ENCODE measurements at regions of chr14 and their contacts with region 1.

Region 1: GRCh38 chr14:76876076-76876475 is 49.9 kb downstream of the LRRC74A start:
- DNase-seq: peak; percentile 22 to 59 (median 34)
- H3K4me3 ChIP-seq: no peak overlapping the region
- H3K4me3 Mint-ChIP-seq: no peak overlapping the region
- H3K27ac ChIP-seq: no peak overlapping the region
- H3K27ac Mint-ChIP-seq: no peak overlapping the region
- H3K4me1 ChIP-seq: no peaks in the 10 kb centered on the region
- H3K4me1 Mint-ChIP-seq: no peaks in the 10 kb centered on the region
- H3K27me3 ChIP-seq: no peaks in the 10 kb centered on the region
- H3K27me3 Mint-ChIP-seq: peaks cover 0 to 7% of the 10 kb centered on the region in 2 donors

Region 2: DNA sequence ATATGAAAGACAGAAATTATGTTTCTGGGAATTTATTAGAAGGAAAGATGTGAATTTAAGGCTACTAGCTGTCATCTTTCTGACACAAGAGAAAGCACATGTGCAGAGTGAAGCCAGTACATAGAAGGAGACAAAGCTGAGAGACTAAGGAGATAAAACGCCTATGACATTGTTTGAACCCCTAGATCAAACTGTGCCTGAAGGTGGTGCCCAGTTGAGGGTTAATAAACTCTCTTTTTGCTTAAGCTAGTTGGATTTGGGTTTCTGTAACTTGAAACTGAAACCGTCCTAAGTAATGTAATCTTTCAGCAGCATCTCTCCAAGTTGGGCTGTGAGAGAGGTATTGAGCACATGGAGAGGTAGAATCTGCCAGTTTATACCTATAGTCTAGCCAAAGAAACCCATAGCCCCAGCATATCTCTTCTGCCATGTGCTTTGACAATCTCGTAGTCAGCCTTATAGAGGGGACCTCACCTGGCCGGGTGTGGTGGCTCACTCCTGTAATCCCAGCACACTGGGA is 34.4 kb after region 1 on chr14:
- CTCF ChIA-PET with region 1: interaction called, 16 read pairs
- POLR2A ChIA-PET with region 1: interaction called, 6 read pairs
- DNase-seq: no peak
- H3K4me3 ChIP-seq: no peak overlapping the region
- H3K4me3 Mint-ChIP-seq: no peak overlapping the region
- H3K27ac ChIP-seq: no peak overlapping the region
- H3K27ac Mint-ChIP-seq: no peak overlapping the region
- H3K4me1 ChIP-seq: peaks cover 23% of the 10 kb centered on the region
- H3K4me1 Mint-ChIP-seq: peaks cover 15 to 21% (median 16%) of the 10 kb centered on the region in 3 donors
- H3K27me3 ChIP-seq: no peaks in the 10 kb centered on the region
- H3K27me3 Mint-ChIP-seq: no peaks in the 10 kb centered on the region

Region 3: DNA sequence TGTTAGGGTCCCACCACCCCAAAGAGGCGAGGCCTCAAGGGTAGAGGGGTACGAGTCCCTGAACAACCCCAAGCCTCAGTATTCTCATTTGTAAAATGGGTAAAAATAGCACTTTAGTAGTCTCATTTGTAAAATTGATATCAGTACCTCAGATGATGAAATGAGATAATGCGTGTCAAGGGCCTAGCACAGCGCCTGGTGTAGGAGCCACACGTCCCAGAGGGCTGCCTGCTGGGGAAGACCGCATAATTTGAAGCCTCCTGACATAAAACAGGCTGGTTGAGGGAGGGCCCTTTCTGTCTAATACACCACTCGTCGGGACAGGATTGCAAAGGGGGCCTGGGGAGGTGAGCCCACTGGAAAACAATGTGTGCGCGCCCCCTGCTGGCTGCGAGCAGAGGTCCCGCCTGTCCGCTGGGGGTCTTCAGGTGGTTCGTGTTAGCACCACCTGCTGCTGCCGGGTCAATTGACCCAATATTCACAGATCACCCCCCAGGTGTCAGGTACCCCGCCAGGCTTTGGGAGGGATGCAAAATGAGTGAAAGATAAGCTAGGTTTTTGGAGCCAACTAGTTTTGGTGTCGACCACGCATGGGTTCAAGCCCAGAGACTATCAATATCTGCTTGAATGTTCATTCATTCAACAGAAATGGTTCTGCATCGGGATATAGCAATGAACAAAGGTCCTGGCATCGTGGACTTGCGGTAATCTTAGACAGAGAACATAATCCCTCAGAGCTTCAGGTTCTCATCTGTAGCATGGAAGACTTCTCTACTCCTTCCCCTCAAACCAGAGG is 177.2 kb after region 1 on chr14:
- CTCF ChIA-PET with region 1: interaction called, 23 read pairs
- POLR2A ChIA-PET with region 1: no interaction called
- DNase-seq: peak; percentile 72 to 85 (median 72)
- H3K4me3 ChIP-seq: no peak overlapping the region
- H3K4me3 Mint-ChIP-seq: no peak overlapping the region
- H3K27ac ChIP-seq: no peak overlapping the region
- H3K27ac Mint-ChIP-seq: peak overlapping the region in 5 of 8 donors; percentile 24 to 51 (median 36)
- H3K4me1 ChIP-seq: peaks cover 9% of the 10 kb centered on the region
- H3K4me1 Mint-ChIP-seq: peaks cover 4 to 15% (median 14%) of the 10 kb centered on the region in 3 donors
- H3K27me3 ChIP-seq: no peaks in the 10 kb centered on the region
- H3K27me3 Mint-ChIP-seq: no peaks in the 10 kb centered on the region

Region 4: GRCh38 chr14:77097700-77098528 is 221.8 kb after region 1 on chr14 and contains the start of gene CIPC:
- CTCF ChIA-PET with region 1: interaction called, 14 read pairs
- POLR2A ChIA-PET with region 1: no interaction called
- DNase-seq: peak; percentile 98 to 100 (median 99)
- H3K4me3 ChIP-seq: peak within 1 kb of the TSS; percentile 76
- H3K4me3 Mint-ChIP-seq: peak within 1 kb of the TSS; percentile 88 to 100 (median 92)
- H3K27ac ChIP-seq: peak within 1 kb of the TSS; percentile 97
- H3K27ac Mint-ChIP-seq: peak within 1 kb of the TSS; percentile 91 to 100 (median 97)
- H3K4me1 ChIP-seq: peaks cover 20% of the 10 kb centered on the region
- H3K4me1 Mint-ChIP-seq: peaks cover 26 to 61% (median 49%) of the 10 kb centered on the region in 3 donors
- H3K27me3 ChIP-seq: no peaks in the 10 kb centered on the region
- H3K27me3 Mint-ChIP-seq: no peaks in the 10 kb centered on the region
- total RNA-seq, gene CIPC: 10.5 to 12.7 TPM

Region 5: GRCh38 chr14:77314043-77314442 is 438.0 kb after region 1 on chr14:
- CTCF ChIA-PET with region 1: interaction called, 13 read pairs
- POLR2A ChIA-PET with region 1: no interaction called
- DNase-seq: no peak
- H3K4me3 ChIP-seq: no peak overlapping the region
- H3K4me3 Mint-ChIP-seq: no peak overlapping the region
- H3K27ac ChIP-seq: no peak overlapping the region
- H3K27ac Mint-ChIP-seq: no peak overlapping the region
- H3K4me1 ChIP-seq: no peaks in the 10 kb centered on the region
- H3K4me1 Mint-ChIP-seq: peaks cover 0 to under 1% (median 0%) of the 10 kb centered on the region in 3 donors
- H3K27me3 ChIP-seq: no peaks in the 10 kb centered on the region
- H3K27me3 Mint-ChIP-seq: no peaks in the 10 kb centered on the region